Esophagus muscularis mucosa (tissue), 4 donors: ENCODE measurements at regions of chr12 and their contacts with region 1.

Region 1: DNA sequence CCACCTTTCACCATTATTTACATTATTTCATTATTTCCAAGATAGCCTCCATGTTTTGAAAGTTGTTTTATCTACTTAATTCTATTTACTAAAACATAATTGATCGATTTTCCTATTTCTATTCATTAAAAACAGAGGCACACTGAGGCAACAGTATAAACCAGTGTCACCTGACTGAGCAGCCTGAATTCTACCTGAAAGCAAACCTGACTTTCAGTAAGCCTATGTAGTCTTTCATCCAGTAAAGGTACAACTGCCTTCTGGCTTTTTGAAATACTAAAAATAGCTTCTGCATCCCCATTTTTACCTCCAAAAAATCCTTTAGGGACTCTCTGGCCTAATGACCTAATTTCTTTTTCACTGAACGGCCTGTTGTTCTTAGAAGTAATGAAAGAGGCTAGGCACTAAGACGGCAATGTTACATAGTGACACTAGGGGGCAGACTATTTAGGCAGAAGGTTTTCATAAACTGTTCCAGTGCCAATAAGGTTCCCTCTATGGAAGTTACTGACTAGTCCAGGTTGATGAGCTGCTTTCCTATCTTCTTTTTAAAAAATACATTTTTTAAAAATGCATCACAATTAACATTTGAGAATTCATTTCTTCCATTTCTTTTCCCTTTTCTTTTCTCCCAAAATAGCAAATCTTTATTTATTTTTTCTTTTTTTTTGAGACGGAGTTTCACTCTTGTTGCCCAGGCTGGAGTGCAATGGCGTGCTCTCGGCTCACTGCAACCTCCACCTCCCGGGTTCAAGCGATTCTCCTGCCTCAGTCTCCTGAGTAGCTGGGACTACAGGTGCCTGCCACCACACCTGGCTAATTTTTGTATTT is 17.5 kb downstream of the ANAPC5 start:
- DNase-seq: no peak
- H3K4me3 ChIP-seq: no peak overlapping the region
- H3K27ac ChIP-seq: no peak overlapping the region
- H3K4me1 ChIP-seq: peaks cover 0 to 5% (median 3%) of the 10 kb centered on the region in 4 donors
- H3K27me3 ChIP-seq: no peaks in the 10 kb centered on the region
- CTCF ChIP-seq: peak; percentile 87 to 91 (median 87)
- EP300 ChIP-seq: no peak
- POLR2A ChIP-seq: no peak

Region 2: GRCh38 chr12:121443193-121443870 is 108.6 kb after region 1 on chr12:
- intact Hi-C with region 1: loop called (anchors 1 kb)
- DNase-seq: no peak
- H3K4me3 ChIP-seq: no peak overlapping the region
- H3K27ac ChIP-seq: peak overlapping the region in 1 of 4 donors; percentile 25
- H3K4me1 ChIP-seq: peaks cover 5 to 20% (median 12%) of the 10 kb centered on the region in 4 donors
- H3K27me3 ChIP-seq: no peaks in the 10 kb centered on the region
- CTCF ChIP-seq: peak; percentile 89 to 97 (median 93)
- EP300 ChIP-seq: no peak
- POLR2A ChIP-seq: no peak